ENCODE measurements at regions of chr13 and their contacts with region 1.

Region 1: GRCh38 chr13:95676762-95677563 is at the start of gene DNAJC3:
- DNase-seq: peak; percentile 99 to 100
- ATAC-seq: peak; percentile 94 to 95 (median 94)
- H3K4me3 ChIP-seq: peak within 1 kb of the TSS; percentile 91
- H3K27ac ChIP-seq: peak within 1 kb of the TSS; percentile 97
- H3K4me1 ChIP-seq: peaks cover 58% of the 10 kb centered on the region
- H3K27me3 ChIP-seq: no peaks in the 10 kb centered on the region
- CTCF ChIP-seq: no peak
- total RNA-seq, gene DNAJC3: 11.5 to 19.6 (median 17.2) TPM

Region 2: DNA sequence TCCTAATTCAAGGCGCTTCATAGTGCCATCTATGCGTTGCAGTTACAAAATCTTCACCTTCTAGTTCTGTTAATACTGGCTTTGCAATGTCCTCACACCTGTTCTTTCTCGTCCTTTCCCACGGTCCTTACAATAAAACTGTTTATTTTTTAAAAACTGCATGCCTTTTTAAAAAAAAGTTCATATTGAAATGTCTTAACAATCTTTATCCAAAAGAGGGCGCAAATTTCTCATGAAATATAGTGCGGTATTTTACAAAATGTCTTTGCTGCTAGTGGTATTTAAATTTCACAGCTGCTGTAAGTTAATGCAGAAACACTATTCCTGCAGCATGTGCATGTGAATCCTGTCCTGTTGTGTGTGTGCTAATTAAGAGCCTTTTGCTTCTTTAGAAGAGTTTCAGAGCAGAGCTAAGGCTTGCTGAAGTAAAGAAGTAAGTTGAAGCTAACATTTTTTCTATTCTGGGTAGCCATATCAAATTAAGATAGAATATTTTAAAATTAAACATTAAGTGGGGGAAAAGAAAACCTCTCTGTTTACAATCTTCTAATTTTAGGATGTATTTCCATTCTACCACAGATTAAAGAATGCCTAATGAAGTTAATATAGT is 140.2 kb before region 1 on chr13:
- intact Hi-C with region 1: loop called in 1 of 2 experiments (anchors 10 kb)
- DNase-seq: no peak
- ATAC-seq: no peak
- H3K4me3 ChIP-seq: no peak overlapping the region
- H3K27ac ChIP-seq: no peak overlapping the region
- H3K4me1 ChIP-seq: peaks cover 35% of the 10 kb centered on the region
- H3K27me3 ChIP-seq: no peaks in the 10 kb centered on the region
- CTCF ChIP-seq: peak; percentile 30

Region 3: DNA sequence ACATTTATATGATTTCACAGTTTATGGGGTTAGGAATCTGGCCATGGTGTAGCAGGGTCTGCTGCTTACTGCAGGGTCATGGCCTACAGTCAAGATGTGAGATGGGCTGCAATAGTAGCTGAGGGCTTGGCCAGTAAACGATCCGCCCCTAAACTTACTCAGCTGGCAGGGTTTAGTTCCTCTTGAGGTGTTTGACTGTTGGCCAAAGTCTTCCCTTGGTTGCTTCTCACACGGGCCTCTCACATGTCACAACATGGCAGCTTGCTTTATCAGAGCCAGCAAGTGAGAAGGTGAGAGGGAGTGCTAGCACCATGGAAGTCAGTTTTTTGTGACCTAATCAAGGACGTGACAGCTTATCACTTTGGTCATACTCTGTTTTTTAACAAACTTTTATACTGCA is 77.1 kb after region 1 on chr13:
- intact Hi-C with region 1: loop called (anchors 5 kb)
- DNase-seq: peak in 1 of 2 donors; percentile 47
- ATAC-seq: peak; percentile 54 to 93 (median 88)
- H3K4me3 ChIP-seq: no peak overlapping the region
- H3K27ac ChIP-seq: no peak overlapping the region
- H3K4me1 ChIP-seq: peaks cover 15% of the 10 kb centered on the region
- H3K27me3 ChIP-seq: no peaks in the 10 kb centered on the region
- CTCF ChIP-seq: no peak